AG04449 (cell line): ENCODE measurements at regions of chr6 and their contacts with region 1.

Region 1: GRCh38 chr6:137799950-137800568 is 67.0 kb upstream of the TNFAIP3 start:
- DNase-seq: no peak
- H3K4me3 ChIP-seq: no peak overlapping the region
- CTCF ChIP-seq: peak; percentile 35

Region 2: GRCh38 chr6:137602313-137603270 is 197.5 kb before region 1 on chr6:
- CTCF ChIA-PET with region 1: no interaction called
- POLR2A ChIA-PET with region 1: no interaction called
- DNase-seq: no peak
- H3K4me3 ChIP-seq: no peak overlapping the region
- CTCF ChIP-seq: no peak

Region 3: DNA sequence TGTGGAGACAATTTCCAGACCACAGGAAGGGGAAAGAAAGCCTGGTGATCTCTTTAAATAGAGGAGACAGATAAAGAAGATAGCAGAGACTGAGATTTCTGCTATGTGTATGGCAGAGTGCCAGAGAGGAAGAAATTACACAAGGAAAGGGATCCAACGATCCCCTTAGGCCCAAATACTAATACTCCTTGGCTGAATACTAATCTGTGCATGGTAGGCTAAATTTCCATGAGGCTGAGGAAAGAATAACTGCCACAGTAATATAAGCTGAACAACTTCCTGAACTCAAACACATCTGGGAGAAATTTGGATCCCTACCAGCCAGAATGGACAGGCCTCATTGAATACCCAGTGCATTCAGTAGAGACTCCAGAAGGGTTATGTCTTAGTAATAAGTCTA is 16.3 kb before region 1 on chr6:
- CTCF ChIA-PET with region 1: interaction called, 26 read pairs
- POLR2A ChIA-PET with region 1: no interaction called
- DNase-seq: no peak
- H3K4me3 ChIP-seq: no peak overlapping the region
- CTCF ChIP-seq: no peak

Region 4: DNA sequence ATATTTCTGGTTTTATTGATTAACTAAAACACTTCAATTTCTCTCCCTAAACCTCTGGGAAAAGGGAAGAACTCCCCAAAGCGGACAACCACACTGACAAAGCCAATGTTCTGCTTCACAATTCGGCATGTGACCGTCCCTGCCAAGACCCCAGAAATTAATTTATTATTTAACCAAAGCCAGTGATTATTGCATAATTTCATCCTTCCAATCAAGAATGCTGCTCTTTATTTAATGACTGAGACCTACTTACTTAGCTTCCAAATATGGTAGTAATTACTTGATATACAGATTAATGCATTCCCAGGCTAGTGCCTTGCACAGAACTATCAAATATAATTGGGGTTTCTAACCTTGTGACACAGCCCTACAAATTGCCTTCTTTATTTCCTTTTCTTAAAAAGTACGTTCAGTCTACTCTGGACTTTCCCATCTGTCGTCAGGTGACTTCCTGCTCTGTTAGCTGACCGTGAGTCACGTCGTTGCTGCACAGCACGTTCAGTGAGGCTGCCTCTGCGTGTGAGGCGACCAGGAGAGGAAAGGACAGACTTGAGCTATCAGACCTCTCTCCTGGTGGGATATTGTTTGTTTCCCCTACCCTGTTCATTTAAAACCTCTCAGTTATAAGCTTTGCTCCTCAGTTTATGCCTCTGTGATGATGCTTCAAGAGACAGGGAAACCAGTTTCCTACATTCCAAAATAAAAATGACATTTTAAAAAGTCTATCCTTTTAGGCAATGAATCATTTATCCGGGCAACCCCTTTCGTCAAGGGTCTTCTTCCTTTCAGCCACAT is 11.3 kb after region 1 on chr6:
- CTCF ChIA-PET with region 1: interaction called, 22 read pairs
- POLR2A ChIA-PET with region 1: no interaction called
- DNase-seq: peak; percentile 64
- H3K4me3 ChIP-seq: no peak overlapping the region
- CTCF ChIP-seq: no peak